GM12878 (cell line): ENCODE measurements at regions of chr1 and their contacts with region 1.

Region 1: DNA sequence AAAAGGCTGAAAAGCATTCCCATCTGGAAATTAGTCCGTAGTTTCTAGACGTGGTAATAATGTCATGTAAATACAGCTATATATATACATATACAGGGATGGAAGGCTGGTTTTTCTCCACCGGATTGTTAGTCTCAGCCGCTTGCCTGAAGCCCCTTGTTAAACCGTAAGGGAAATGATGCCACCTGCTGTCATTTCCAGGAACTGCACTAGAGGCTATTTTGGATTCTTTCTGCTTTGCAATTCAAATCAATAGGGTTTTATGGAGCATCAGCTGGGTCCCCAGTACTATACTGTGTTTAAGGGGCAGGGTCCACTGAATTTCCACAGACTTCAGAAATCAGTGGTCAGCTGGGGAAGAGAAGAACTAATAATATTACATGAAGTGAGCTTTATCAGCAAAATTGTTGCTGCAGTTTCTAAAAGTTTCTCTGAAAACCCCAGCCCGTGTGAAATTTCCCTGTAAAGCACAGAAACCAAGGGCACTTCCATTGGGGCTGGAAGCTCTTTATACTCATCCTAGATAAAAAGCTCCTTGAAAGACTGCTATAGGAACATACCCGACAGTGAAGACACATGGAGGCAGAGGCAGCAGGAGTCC is 33.8 kb upstream of the MPZL1 start:
- DNase-seq: peak; percentile 80
- ATAC-seq: peak; percentile 90
- H3K4me3 ChIP-seq: no peak overlapping the region
- H3K27ac ChIP-seq: peak overlapping the region; percentile 30; the same call in 1 of the 2 replicates
- H3K4me1 ChIP-seq: peaks cover 9% of the 10 kb centered on the region
- H3K27me3 ChIP-seq: no peaks in the 10 kb centered on the region
- CTCF ChIP-seq: peak; percentile 83 to 94 (median 93)
- EP300 ChIP-seq: no peak
- POLR2A ChIP-seq: no peak
- RAD21 ChIP-seq: peak; percentile 99

Region 2: GRCh38 chr1:167454894-167455785 is 232.9 kb before region 1 on chr1:
- CTCF ChIA-PET with region 1: interaction called, 4 read pairs
- POLR2A ChIA-PET with region 1: no interaction called
- RAD21 ChIA-PET with region 1: interaction called, 3 read pairs
- SMC1A ChIA-PET with region 1: no interaction called
- in situ Hi-C with region 1: no loop called
- intact Hi-C with region 1: loop called (anchors 5 kb)
- DNase-seq: no peak
- ATAC-seq: peak; percentile 79
- H3K4me3 ChIP-seq: peak overlapping the region; percentile 80
- H3K27ac ChIP-seq: peak overlapping the region; percentile 20; the same call in 1 of the 2 replicates
- H3K4me1 ChIP-seq: peaks cover 5% of the 10 kb centered on the region
- H3K27me3 ChIP-seq: no peaks in the 10 kb centered on the region
- CTCF ChIP-seq: no peak
- EP300 ChIP-seq: no peak; a peak in 1 of 4 replicates
- POLR2A ChIP-seq: peak; percentile 37
- RAD21 ChIP-seq: no peak

Region 3: DNA sequence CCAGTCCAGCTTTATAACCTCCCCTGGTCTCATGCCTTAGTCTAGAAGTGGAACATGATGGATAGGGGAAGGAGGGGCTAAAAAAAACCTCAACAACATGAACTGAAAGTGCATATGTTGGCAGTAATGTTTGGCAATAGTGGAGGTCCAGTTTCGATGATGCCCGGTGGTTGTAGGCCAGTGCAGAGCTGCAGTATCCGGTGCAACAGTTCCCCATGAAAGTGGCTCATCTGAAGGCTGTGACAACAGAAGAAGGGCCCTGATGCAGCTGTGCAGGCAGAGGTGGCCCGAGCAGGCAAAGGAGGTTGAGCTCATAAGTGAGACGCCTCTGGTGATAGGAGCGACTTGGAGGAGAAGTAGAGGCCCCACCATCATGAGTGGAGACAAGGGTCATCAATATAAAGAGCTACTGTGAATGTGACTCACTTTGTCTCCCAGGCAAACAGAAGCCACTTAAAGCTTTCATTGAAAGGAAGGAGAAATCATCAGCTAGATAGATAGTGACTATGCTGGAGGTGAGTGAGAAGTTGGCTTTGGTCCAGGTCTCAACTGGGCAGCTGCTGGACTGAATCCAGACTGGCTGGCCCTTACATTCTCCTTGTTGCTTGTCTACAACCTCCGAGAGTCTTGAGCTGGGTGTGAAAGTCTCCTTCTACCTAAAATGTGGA is 124.3 kb before region 1 on chr1:
- CTCF ChIA-PET with region 1: interaction called, 71 read pairs
- POLR2A ChIA-PET with region 1: no interaction called
- RAD21 ChIA-PET with region 1: interaction called, 10 read pairs
- SMC1A ChIA-PET with region 1: interaction called, 33 read pairs
- in situ Hi-C with region 1: no loop called
- intact Hi-C with region 1: no loop called
- DNase-seq: no peak
- ATAC-seq: peak; percentile 21; the same call in 2 of the 3 replicates
- H3K4me3 ChIP-seq: no peak overlapping the region
- H3K27ac ChIP-seq: no peak overlapping the region
- H3K4me1 ChIP-seq: peaks cover 8% of the 10 kb centered on the region; the same call in 1 of the 2 replicates
- H3K27me3 ChIP-seq: no peaks in the 10 kb centered on the region
- CTCF ChIP-seq: no peak
- EP300 ChIP-seq: no peak
- POLR2A ChIP-seq: no peak
- RAD21 ChIP-seq: no peak

Region 4: DNA sequence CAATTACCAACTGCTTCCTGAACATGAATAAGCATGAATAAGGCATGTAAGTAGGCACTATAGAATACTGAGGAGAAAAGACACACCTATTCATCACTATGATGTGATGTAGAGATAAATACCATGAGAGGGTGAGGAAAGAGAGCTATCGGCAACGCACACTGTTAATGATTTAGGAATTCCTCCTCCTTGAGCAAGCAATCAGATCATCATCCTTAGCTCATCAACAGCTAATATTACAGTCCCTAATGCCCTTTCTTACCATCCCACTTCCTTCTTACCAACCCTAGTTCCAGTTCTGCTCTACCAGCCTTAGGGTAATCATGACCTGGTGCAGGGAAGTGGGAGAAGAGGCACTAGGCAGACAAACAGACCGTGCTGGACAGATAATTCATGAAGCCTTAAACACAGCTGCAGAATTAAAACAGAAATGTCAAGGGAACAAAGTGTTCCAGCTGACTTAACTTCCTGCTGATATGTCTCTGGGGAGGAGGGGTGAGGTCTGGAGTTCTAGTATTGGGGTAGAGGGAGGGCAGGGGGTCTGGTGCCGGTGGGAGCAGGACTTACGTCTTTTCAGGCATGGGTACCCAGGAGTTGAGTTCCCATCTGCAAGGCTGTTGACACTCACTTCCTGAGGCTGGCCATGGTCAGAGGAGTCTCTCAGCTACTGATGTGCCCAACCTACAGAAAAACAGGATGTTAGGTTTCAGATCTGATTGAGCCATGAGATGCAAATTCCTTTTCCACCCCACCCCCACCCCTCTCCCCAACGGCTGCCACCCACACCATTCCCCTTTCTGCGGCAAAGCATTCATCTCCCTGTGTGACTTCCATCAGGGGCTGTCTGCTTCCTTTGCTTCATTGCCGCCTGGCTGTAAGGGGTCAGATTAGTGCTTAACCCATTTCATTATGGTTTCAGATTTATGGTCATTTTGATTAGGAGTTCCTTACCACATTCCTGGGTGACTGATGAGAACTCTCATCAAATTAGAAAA is 70.6 kb before region 1 on chr1:
- CTCF ChIA-PET with region 1: interaction called, 27 read pairs
- POLR2A ChIA-PET with region 1: no interaction called
- RAD21 ChIA-PET with region 1: interaction called, 12 read pairs
- SMC1A ChIA-PET with region 1: interaction called, 31 read pairs
- in situ Hi-C with region 1: no loop called
- intact Hi-C with region 1: no loop called
- DNase-seq: peak; percentile 74
- ATAC-seq: peak; percentile 87
- H3K4me3 ChIP-seq: peak overlapping the region; percentile 62
- H3K27ac ChIP-seq: peak overlapping the region; percentile 70
- H3K4me1 ChIP-seq: peaks cover 22% of the 10 kb centered on the region
- H3K27me3 ChIP-seq: no peaks in the 10 kb centered on the region
- CTCF ChIP-seq: no peak
- EP300 ChIP-seq: no peak
- POLR2A ChIP-seq: peak; percentile 58
- RAD21 ChIP-seq: no peak

Region 5: DNA sequence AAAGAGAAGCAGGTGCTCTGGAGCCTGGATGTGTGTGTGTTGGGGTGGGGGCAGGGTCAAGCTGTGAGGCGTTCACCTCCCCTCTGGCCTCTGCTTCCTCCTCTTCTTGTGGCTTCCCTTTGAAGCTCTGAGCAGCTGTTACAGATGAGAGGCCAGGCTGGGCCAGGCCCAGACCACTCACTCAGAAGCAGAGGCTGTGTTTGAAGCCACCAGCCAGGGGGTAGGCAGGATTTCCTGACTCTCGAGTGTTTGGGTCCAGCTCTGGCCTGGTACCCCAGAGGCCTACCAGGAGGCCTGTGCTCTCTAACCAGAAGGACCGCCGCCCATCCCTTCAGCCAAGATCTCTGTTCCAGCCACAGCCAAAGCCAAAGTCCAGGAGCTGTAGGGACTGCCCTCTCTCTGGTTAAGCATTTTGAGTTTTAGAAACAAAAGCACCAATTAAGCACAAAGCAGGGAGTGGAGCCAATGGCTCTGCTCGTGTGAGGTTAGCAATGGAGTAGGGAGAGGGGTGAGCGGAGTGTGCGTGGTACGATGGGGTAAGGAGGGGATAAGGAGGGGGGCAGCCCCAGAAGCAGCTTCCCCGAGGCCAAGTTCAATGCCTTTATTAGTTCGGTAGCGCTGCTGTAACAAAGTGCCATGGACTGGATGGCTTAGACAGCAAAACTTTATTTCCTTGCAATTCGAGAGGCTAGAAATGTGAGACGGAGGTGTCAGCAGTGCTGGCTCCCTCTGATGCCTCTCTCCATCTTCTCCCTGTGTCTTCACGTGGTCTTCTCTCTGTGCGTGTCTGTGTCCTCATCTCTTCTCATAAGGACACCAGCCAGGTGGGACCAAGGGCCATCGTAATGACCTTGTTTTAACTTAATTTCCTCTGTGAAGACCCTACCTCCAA is 37.5 kb before region 1 on chr1:
- CTCF ChIA-PET with region 1: interaction called, 12 read pairs
- POLR2A ChIA-PET with region 1: no interaction called
- RAD21 ChIA-PET with region 1: interaction called, 17 read pairs
- SMC1A ChIA-PET with region 1: interaction called, 16 read pairs
- in situ Hi-C with region 1: no loop called
- intact Hi-C with region 1: no loop called
- DNase-seq: no peak
- ATAC-seq: peak; percentile 92
- H3K4me3 ChIP-seq: no peak overlapping the region
- H3K27ac ChIP-seq: peak overlapping the region; percentile 55
- H3K4me1 ChIP-seq: peaks cover 39% of the 10 kb centered on the region
- H3K27me3 ChIP-seq: no peaks in the 10 kb centered on the region
- CTCF ChIP-seq: no peak
- EP300 ChIP-seq: no peak
- POLR2A ChIP-seq: peak; percentile 23; the same call in 1 of the 2 replicates
- RAD21 ChIP-seq: no peak

Region 6: DNA sequence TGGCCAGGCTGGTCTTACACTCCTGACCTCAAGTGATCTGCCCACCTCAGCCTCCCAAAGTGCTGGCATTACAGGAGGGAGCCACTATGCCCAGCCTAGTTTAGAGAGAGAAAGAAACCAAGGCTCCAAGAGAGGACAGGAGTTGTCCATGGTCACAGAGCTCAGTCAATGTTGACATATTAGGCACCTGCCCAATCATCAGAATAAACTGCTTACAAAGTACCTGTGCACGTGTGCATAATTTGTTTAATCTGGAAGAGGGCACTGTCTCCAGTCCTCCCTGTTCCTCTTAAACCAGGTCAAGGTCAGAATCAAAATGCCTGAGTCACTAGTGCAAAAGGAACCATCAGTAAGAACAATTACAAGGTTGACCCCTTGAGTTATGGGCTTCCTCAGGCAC is 13.5 kb after region 1 on chr1:
- CTCF ChIA-PET with region 1: interaction called, 28 read pairs
- POLR2A ChIA-PET with region 1: interaction called, 3 read pairs
- RAD21 ChIA-PET with region 1: interaction called, 18 read pairs
- SMC1A ChIA-PET with region 1: interaction called, 29 read pairs
- in situ Hi-C with region 1: no loop called
- intact Hi-C with region 1: no loop called
- DNase-seq: no peak
- ATAC-seq: no peak
- H3K4me3 ChIP-seq: no peak overlapping the region
- H3K27ac ChIP-seq: no peak overlapping the region
- H3K4me1 ChIP-seq: peaks cover 13% of the 10 kb centered on the region
- H3K27me3 ChIP-seq: no peaks in the 10 kb centered on the region
- CTCF ChIP-seq: no peak
- EP300 ChIP-seq: no peak
- POLR2A ChIP-seq: no peak
- RAD21 ChIP-seq: no peak

Region 7: DNA sequence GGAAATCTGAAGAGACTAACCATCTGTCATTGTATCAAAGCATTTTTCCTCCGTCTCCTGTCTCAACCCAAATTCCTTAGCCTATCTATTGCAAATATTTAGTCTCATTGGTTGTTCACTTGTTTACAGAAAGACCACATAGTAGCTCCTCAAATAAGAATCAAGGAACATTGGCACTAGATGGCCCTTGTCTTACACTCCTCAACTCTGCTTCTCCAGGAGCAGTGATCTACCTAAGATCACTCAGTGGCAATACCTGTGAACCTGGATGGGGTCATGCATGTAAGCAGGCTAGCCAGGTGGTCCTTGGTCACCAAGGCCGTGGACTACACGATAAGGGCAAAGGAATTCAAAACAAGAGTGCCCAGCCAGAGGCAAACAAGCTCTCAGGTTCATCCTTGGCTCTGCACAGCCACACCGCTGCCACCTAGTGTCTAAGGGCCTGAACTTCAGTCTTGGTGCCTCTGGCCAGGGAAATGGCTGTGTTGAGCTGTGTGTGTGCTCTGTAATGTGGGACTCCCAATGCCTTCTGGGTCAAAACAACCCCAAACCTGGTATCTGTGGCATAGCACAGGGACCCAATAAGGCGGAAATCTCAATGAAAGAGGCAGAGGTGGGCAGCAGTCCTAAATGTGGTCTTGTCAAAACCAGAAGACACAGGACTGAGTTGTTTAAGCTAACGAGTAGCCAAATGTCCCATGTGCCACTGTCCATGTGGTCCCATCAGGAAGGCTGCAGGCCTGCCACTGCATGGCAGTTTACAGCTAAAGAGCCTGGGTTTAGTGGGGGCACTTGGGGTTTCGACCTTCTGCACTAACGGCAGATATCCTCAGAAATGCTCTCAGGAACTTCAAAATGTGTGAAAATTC is 394.2 kb after region 1 on chr1:
- CTCF ChIA-PET with region 1: interaction called, 13 read pairs
- POLR2A ChIA-PET with region 1: no interaction called
- RAD21 ChIA-PET with region 1: interaction called, 7 read pairs
- SMC1A ChIA-PET with region 1: interaction called, 6 read pairs
- in situ Hi-C with region 1: no loop called
- intact Hi-C with region 1: no loop called
- DNase-seq: peak; percentile 17
- ATAC-seq: peak; percentile 95
- H3K4me3 ChIP-seq: no peak overlapping the region
- H3K27ac ChIP-seq: no peak overlapping the region
- H3K4me1 ChIP-seq: no peaks in the 10 kb centered on the region
- H3K27me3 ChIP-seq: no peaks in the 10 kb centered on the region
- CTCF ChIP-seq: peak; percentile 92 to 98 (median 95); a peak in 5 of 6 replicates
- EP300 ChIP-seq: no peak
- POLR2A ChIP-seq: no peak
- RAD21 ChIP-seq: peak; percentile 83